Activated T-helper 1 cell treated with anti-CD3 and anti-CD28 coated beads, Interleukin-12 subunit alpha, Interleukin-12 subunit beta, Interleukin-2, Interleukin-4 antibody, amounts not matched to agents 30 ng/mL and 10 ng/mL and 1 ng/mL, durations not matched to agents 14 hours and 24 hours and 36 hours (primary cell): ENCODE measurements at regions of chr13 and their contacts with region 1.

Region 1: DNA sequence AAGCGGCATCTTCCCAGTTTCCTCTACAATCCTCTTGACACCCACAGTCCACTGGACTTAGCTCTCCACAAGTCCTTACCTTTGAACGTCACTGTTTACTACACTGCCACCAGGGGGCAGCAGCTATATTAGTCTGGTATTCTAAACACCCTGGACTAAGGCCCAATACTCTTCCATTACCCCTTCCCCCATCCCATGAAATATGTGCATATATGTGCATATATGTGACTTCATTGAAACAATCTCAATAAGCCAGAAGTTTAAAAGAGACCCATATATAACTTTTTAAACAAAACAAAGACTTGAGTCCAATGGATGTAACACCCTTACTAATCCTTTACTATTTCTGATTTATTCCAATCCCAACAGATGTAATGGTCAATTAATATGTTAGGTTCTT is 15.5 kb downstream of the GGACT start:
- DNase-seq: peak; percentile 56
- H3K4me3 Mint-ChIP-seq: no peak overlapping the region
- H3K27ac Mint-ChIP-seq: no peak overlapping the region
- H3K4me1 Mint-ChIP-seq: peaks cover 24% of the 10 kb centered on the region
- H3K27me3 Mint-ChIP-seq: no peaks in the 10 kb centered on the region

Region 2: GRCh38 chr13:100290165-100290801 is 282.8 kb before region 1 on chr13:
- intact Hi-C with region 1: no loop called
- DNase-seq: no peak
- H3K4me3 Mint-ChIP-seq: no peak overlapping the region
- H3K27ac Mint-ChIP-seq: no peak overlapping the region
- H3K4me1 Mint-ChIP-seq: no peaks in the 10 kb centered on the region
- H3K27me3 Mint-ChIP-seq: no peaks in the 10 kb centered on the region

Region 3: DNA sequence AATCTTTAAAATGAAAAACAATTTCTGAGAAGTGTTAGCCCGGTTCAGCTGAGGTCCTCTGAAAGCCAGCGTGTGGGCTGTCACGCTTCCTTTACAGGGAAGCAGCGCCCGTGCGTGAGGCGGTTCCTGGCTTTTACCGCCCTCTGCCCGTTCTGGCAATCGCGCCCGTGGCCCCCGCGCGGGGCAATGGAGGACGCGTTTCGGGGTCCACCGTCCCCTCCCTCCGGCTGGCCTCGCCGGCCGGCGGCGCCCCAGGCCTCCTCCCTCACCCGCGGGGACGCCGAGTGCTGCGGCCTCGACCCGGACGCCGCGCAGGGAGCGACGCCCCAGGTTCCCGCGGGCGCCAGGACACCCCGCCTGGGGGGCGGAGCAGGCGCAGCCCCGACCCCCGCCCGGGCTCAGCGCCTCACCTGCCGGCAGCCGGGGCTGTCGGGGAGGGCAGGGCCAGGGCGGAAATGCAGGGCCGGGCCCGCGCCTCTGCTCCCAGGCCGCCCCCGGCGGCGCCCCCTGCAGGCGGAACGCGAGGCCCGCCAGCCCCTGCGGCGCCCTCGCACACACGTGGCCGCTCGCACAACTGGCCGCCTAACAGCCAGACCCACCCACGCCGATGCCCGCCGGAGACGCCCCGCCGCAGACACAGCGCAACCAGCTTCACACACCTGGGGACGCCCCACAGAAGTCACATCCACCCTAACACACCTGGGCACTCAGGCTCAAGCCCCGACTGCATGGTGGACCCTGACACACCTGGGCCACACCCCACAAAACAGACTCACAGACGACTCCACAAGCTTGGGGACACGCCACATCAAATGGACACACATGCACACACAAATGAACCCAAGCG is 15.4 kb after region 1 on chr13 and contains the start of gene GGACT:
- intact Hi-C with region 1: loop called (anchors 1 kb)
- DNase-seq: peak; percentile 79
- H3K4me3 Mint-ChIP-seq: peak within 1 kb of the TSS; percentile 87
- H3K27ac Mint-ChIP-seq: peak within 1 kb of the TSS; percentile 94
- H3K4me1 Mint-ChIP-seq: peaks cover 57% of the 10 kb centered on the region
- H3K27me3 Mint-ChIP-seq: no peaks in the 10 kb centered on the region
- total RNA-seq, gene GGACT: 4.0 and 7.2 TPM in 2 replicates

Region 4: DNA sequence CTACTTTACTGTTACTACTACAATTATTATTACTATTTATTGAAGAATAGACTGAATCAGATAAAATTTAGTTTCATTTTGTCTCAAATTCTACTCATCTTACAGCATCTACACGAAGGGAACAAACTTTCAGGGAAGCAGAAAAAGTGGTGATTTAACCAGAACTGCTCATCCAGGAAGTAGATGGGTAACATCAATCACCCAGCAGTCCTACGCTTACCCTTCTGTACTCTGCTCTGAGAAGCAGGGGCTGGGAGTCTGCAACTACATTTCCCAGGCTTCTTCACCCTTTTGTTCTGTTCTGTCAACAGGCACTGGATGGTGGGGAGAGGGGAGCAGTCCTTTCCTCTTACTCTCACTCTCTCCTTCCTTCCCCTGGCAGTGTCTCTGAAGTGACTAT is 46.8 kb after region 1 on chr13:
- intact Hi-C with region 1: no loop called
- DNase-seq: no peak
- H3K4me3 Mint-ChIP-seq: no peak overlapping the region
- H3K27ac Mint-ChIP-seq: no peak overlapping the region
- H3K4me1 Mint-ChIP-seq: peaks cover 9% of the 10 kb centered on the region
- H3K27me3 Mint-ChIP-seq: no peaks in the 10 kb centered on the region

Region 5: GRCh38 chr13:100658363-100658762 is 85.2 kb after region 1 on chr13:
- intact Hi-C with region 1: loop called (anchors 5 kb)
- DNase-seq: no peak
- H3K4me3 Mint-ChIP-seq: no peak overlapping the region
- H3K27ac Mint-ChIP-seq: peak overlapping the region; percentile 65
- H3K4me1 Mint-ChIP-seq: peaks cover 23% of the 10 kb centered on the region
- H3K27me3 Mint-ChIP-seq: no peaks in the 10 kb centered on the region

Region 6: DNA sequence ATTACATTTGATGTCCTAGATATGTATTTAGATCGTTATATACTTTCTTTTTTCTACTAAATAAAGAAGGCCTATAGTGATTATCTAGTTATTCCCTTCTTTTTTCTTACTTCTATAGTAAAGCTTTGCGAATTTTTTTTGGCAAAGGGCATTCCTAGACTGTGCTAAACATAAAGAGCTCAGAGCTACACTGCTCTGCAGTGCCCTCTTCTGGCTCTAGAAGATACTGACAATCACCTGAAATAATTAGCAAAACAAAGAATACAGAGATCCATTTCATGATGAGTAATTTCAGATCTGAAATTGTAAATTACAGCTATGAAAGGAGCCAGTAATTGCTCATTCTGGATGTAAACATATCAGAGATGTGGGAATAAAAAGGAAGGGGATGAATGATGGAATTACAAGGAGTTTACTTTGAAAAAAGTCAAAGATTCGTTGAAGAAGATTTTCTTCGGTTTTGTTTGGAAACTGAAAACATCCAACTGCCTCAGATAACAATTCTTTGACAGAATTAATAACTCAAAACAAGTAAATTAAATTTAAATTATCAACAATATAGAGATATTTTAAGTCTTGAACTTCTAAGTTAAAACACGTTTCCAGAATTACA is 554.7 kb after region 1 on chr13:
- intact Hi-C with region 1: loop called (anchors 1 kb)
- DNase-seq: no peak
- H3K4me3 Mint-ChIP-seq: no peak overlapping the region
- H3K27ac Mint-ChIP-seq: no peak overlapping the region
- H3K4me1 Mint-ChIP-seq: peaks cover 5% of the 10 kb centered on the region
- H3K27me3 Mint-ChIP-seq: peaks cover 11% of the 10 kb centered on the region